Activated CD4-positive, alpha-beta T cell treated with anti-CD3 and anti-CD28 coated beads for 36 hours (primary cell): ENCODE measurements at regions of chrX and their contacts with region 1.

Region 1: DNA sequence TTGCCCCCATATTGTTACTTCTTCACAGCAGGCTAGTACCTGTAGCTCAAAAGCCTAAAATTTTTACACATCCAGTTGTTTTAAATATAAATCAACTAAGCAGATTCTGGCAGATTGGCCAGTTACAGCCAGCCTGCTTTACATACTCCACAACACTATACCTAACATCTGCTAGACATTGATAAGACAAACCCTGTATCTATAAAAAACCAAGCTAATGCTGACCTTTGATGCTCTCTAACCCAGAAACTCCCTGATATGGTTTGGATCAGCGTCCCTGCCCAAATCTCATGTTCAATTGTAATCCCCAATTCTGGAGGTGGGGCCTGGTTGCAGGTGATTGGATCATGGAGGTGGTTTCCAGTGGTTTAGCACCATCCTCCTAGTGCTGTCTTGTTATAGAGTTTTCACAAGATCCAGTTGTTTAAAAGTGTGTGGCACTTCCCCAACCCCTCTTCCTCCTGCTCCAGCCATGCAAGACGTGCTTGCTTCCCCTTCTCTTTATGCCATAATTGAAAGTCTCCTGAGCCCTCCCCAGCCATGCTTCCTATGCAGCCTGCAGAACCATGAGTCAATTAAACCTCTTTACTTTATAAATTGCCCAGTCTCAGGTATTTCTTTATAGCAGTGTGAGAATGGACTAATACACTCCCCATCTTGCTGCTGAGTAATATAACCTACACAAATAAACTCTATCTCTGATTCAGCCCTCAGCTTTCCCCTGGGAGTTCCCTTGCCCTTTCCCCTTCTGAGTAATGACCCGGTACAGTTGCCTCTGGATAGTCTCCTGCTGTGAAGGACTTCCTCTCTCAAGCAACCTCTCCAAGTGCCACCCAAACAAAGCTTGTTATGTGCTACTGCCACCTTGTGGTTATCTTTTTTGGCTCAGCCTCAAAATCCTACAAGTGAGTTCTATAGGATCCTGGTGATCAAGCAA is 39.6 kb downstream of the ZCCHC13 start:
- DNase-seq: peak; percentile 47
- ATAC-seq: peak; percentile 95
- H3K4me3 Mint-ChIP-seq: no peak overlapping the region
- H3K27ac Mint-ChIP-seq: no peak overlapping the region
- H3K4me1 Mint-ChIP-seq: peaks cover 4% of the 10 kb centered on the region
- H3K27me3 Mint-ChIP-seq: no peaks in the 10 kb centered on the region

Region 2: GRCh38 chrX:73855546-73855945 is 488.1 kb before region 1 on chrX:
- CTCF ChIA-PET with region 1: no interaction called
- POLR2A ChIA-PET with region 1: no interaction called
- intact Hi-C with region 1: loop called (anchors 1 kb)
- DNase-seq: peak; percentile 67
- ATAC-seq: peak; percentile 61
- H3K4me3 Mint-ChIP-seq: no peak overlapping the region
- H3K27ac Mint-ChIP-seq: no peak overlapping the region
- H3K4me1 Mint-ChIP-seq: no peaks in the 10 kb centered on the region
- H3K27me3 Mint-ChIP-seq: no peaks in the 10 kb centered on the region

Region 3: GRCh38 chrX:73963682-73964081 is 379.9 kb before region 1 on chrX:
- CTCF ChIA-PET with region 1: no interaction called
- POLR2A ChIA-PET with region 1: no interaction called
- intact Hi-C with region 1: no loop called
- DNase-seq: no peak
- ATAC-seq: no peak
- H3K4me3 Mint-ChIP-seq: no peak overlapping the region
- H3K27ac Mint-ChIP-seq: no peak overlapping the region
- H3K4me1 Mint-ChIP-seq: peaks cover 19% of the 10 kb centered on the region
- H3K27me3 Mint-ChIP-seq: no peaks in the 10 kb centered on the region

Region 4: GRCh38 chrX:74015379-74016019 is 328.1 kb before region 1 on chrX:
- CTCF ChIA-PET with region 1: no interaction called
- POLR2A ChIA-PET with region 1: no interaction called
- intact Hi-C with region 1: loop called in 1 of 2 experiments (anchors 5 kb)
- DNase-seq: peak; percentile 71
- ATAC-seq: peak; percentile 73
- H3K4me3 Mint-ChIP-seq: no peak overlapping the region
- H3K27ac Mint-ChIP-seq: no peak overlapping the region
- H3K4me1 Mint-ChIP-seq: no peaks in the 10 kb centered on the region
- H3K27me3 Mint-ChIP-seq: no peaks in the 10 kb centered on the region

Region 5: DNA sequence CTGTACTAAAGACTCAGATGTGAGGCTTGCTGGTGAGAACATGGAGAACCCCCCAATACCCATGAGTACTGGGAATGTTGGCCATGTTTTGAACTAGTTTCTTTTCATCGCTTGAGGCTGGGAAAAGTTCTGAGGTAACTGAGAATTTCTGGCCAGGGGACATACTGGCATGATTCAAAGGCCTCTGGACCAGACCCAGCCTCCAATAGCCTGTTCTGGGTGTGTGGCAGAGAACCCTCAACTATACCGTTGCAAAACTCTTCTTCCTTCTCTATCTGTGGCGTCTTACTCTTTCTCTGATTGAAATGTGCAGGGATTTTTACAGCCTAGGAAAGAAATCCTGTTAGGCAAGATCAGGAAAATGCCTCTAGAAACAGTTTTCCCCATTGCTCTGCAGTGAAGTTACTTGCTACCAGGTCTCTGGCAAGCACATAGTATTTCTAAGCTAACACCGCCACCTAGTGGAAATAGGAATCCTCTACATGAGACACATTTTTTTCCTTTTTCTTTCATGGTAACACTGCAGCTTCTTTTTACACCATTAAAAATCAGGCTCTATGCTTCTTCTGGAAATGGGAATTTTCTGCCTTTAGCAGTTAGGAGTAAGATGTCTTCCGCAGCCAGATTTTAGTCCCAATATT is 210.3 kb before region 1 on chrX:
- CTCF ChIA-PET with region 1: no interaction called
- POLR2A ChIA-PET with region 1: no interaction called
- intact Hi-C with region 1: loop called in 1 of 2 experiments (anchors 1 kb)
- DNase-seq: peak; percentile 6
- ATAC-seq: peak; percentile 49
- H3K4me3 Mint-ChIP-seq: no peak overlapping the region
- H3K27ac Mint-ChIP-seq: no peak overlapping the region
- H3K4me1 Mint-ChIP-seq: no peaks in the 10 kb centered on the region
- H3K27me3 Mint-ChIP-seq: no peaks in the 10 kb centered on the region

Region 6: DNA sequence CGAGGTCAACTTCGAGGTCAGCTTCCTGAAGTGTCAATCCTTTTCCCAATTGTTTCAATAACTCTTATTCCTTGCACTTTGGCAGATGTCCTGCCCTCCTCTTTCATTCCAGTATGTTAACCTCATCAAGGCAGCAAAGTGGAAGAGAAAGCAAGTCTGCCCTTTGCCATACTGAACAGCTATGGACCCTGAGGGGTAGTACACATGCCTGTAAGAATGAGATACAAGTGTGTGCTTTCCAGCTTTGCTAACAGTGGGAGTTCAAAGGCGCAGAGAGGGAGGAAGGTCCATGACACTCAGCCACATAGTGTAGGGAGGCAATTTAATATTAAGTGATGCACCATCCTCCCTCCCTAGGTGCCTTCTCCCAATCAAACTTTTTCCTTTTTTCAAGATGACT is 136.1 kb before region 1 on chrX:
- CTCF ChIA-PET with region 1: no interaction called
- POLR2A ChIA-PET with region 1: no interaction called
- intact Hi-C with region 1: no loop called
- DNase-seq: no peak
- ATAC-seq: no peak
- H3K4me3 Mint-ChIP-seq: no peak overlapping the region
- H3K27ac Mint-ChIP-seq: no peak overlapping the region
- H3K4me1 Mint-ChIP-seq: no peaks in the 10 kb centered on the region
- H3K27me3 Mint-ChIP-seq: no peaks in the 10 kb centered on the region

Region 7: DNA sequence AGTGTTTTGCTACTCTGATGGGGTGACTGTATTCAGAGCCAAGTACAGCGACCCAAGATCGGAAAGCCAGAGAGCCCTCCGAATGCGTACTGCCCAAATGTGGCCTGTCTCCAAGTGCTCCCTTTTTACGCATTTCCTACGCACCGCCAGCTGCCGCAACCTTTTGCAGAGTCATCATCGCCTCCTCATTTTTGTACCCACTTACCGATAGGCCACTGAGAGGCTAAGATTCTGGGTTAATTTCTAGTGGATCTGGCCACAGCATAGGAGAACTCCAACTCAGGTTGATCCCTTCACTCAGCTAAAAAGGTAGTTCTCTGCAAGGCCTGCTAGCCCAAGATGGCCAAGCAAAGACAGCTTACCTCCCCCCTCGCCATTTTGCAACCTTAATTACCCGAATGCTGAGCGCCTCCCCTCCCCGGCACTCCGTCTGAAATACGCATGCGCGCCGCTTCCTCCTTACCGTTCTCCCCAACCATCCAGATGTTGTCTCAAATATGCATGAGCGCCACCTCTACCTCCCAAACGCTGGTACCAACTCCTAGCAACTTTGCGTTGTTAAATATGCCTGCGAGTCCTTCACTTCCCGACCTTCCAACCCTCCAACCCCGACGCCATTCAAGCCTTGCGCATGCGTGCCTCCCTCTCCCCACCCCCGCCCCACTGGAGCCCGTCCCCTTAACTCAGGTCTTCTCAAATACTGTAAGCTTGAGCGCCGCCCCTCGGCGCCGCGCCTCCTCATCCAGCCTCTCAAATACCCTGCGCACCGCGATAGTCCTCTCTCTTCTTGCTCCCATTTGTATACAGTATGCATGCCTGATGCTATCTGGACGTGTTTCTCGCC is 51.4 kb before region 1 on chrX:
- CTCF ChIA-PET with region 1: interaction called, 4 read pairs
- POLR2A ChIA-PET with region 1: no interaction called
- intact Hi-C with region 1: loop called (anchors 2 to 5 kb)
- DNase-seq: peak; percentile 90
- ATAC-seq: peak; percentile 89
- H3K4me3 Mint-ChIP-seq: peak overlapping the region; percentile 89
- H3K27ac Mint-ChIP-seq: peak overlapping the region; percentile 98
- H3K4me1 Mint-ChIP-seq: peaks cover 17% of the 10 kb centered on the region
- H3K27me3 Mint-ChIP-seq: no peaks in the 10 kb centered on the region

Region 8: DNA sequence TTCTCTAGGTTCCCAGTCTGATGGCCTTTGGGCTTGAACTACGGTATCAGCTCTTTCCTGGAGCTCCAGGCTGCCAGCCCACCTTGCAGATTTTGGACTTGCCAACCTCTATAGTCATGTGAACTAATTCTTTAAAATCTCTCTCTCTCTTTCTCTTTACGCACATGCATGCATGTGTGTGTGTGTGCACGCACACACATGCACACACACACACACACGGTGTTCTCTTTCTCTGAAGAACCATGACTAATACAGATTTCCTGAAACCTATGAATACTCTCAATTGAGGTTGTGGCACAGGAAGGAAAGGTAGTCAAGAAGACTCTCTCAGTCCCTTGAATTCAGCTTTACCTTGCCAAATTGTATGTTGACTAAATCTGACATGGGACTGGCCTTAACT is 45.8 kb before region 1 on chrX:
- CTCF ChIA-PET with region 1: no interaction called
- POLR2A ChIA-PET with region 1: no interaction called
- intact Hi-C with region 1: loop called (anchors 2 to 5 kb)
- DNase-seq: peak; percentile 31
- ATAC-seq: peak; percentile 65
- H3K4me3 Mint-ChIP-seq: no peak overlapping the region
- H3K27ac Mint-ChIP-seq: no peak overlapping the region
- H3K4me1 Mint-ChIP-seq: peaks cover 9% of the 10 kb centered on the region
- H3K27me3 Mint-ChIP-seq: no peaks in the 10 kb centered on the region

Region 9: DNA sequence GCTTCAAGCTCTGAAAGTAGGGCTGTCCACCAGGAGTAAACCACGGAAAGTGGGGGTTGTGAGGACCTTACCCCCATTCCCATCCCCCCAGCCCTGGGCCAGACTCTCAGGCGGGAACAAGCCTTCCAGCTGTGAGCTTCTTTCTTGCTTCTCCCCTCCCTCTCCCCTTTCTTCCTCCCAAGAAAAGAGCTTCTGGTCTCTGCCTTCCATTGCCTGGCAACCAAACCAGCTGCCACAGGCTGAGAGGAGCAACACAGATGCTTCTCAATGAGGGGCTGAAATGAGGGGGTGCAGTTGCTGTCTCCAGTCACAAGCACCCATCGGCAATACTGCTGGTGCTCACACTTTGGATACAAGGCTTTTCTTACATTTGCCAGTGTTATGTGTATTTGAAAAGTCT is 150.2 kb after region 1 on chrX:
- CTCF ChIA-PET with region 1: no interaction called
- POLR2A ChIA-PET with region 1: no interaction called
- intact Hi-C with region 1: no loop called
- DNase-seq: no peak
- ATAC-seq: no peak
- H3K4me3 Mint-ChIP-seq: no peak overlapping the region
- H3K27ac Mint-ChIP-seq: no peak overlapping the region
- H3K4me1 Mint-ChIP-seq: no peaks in the 10 kb centered on the region
- H3K27me3 Mint-ChIP-seq: no peaks in the 10 kb centered on the region